ENCODE measurements at regions of chr5 and their contacts with region 1.

Region 1: DNA sequence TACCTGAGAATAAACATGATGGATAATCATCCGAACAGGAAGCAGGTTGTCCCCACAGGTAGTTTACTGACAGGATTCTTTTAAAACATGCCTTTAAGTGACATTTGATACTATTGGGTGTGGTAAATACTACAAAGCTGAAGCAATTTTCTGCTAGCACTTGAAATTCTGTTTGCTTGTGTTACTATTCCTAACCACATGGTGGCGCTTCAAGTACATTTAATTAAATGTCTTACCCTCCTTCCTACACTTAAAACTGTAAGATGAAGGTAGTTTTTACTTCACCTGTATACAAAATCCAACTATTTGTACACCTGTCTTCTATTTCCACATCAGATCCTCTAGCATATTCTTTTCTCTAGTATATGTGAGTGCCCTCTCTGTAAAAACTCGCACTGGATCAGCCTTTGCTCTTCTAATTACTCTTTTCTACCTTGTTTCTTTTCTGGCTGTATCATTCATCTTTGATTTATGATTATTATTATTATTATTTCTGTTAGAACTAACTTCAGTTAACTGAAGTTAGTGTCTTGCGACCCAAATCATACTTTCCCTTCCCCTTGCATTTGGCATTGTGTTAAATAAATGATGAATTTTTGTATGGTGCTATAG is 18.4 kb downstream of the SLC25A46 start:
- DNase-seq: peak; percentile 46
- ATAC-seq: no peak
- H3K4me3 ChIP-seq: no peak overlapping the region
- H3K27ac ChIP-seq: no peak overlapping the region
- H3K4me1 ChIP-seq: no peaks in the 10 kb centered on the region
- H3K27me3 ChIP-seq: no peaks in the 10 kb centered on the region
- CTCF ChIP-seq: peak; percentile 69; the same call in 1 of the 2 replicates

Region 2: GRCh38 chr5:110769000-110769681 is 11.9 kb after region 1 on chr5:
- CTCF ChIA-PET with region 1: no interaction called
- POLR2A ChIA-PET with region 1: interaction called, 11 read pairs
- in situ Hi-C with region 1: no loop called
- intact Hi-C with region 1: no loop called
- DNase-seq: no peak
- ATAC-seq: no peak
- H3K4me3 ChIP-seq: no peak overlapping the region
- H3K27ac ChIP-seq: no peak overlapping the region
- H3K4me1 ChIP-seq: no peaks in the 10 kb centered on the region
- H3K27me3 ChIP-seq: no peaks in the 10 kb centered on the region
- CTCF ChIP-seq: no peak

Region 3: GRCh38 chr5:111063700-111064322 is 306.6 kb after region 1 on chr5:
- CTCF ChIA-PET with region 1: no interaction called
- POLR2A ChIA-PET with region 1: no interaction called
- in situ Hi-C with region 1: no loop called
- intact Hi-C with region 1: loop called (anchors 5 kb)
- DNase-seq: no peak
- ATAC-seq: no peak; the same call in 1 of the 2 replicates
- H3K4me3 ChIP-seq: no peak overlapping the region
- H3K27ac ChIP-seq: no peak overlapping the region
- H3K4me1 ChIP-seq: no peaks in the 10 kb centered on the region
- H3K27me3 ChIP-seq: peaks cover 11% of the 10 kb centered on the region
- CTCF ChIP-seq: peak; percentile 67

Region 4: DNA sequence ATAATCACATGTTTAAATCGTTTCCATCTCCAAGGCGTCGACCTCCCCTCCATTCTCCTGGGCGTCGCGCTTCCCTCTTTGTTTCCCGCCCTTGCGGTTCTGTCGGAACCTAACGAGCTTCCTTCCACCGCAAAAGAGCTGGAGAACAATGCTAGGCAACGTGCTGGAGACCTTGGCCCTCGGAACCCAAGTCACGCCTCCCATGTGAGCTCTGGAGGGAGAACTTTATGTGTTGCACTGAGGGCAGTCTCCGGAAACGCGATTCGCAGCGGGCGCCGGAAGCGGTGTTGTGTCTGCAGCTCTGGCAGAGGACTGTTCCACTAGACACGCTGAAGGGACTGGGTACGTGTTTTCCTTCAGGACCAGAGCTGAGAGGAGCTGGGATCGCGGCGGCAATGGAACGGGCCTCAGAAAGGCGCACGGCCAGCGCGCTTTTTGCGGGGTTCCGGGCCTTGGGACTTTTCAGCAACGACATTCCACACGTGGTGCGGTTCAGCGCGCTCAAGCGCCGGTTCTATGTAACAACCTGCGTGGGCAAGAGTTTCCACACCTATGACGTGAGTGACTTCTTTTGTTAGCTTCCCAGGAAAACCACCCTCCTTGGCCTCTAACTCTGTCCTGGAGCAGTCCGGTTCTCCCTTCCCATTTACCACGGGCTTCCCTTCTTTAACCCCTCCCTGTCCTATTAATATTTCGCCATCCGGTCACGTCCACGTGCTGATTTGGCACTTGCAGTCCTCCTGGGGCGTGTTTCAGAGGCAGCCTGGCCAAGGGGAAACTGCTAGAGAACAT is 335.0 kb after region 1 on chr5 and contains the start of gene WDR36:
- CTCF ChIA-PET with region 1: no interaction called
- POLR2A ChIA-PET with region 1: no interaction called
- in situ Hi-C with region 1: no loop called
- intact Hi-C with region 1: loop called (anchors 10 kb)
- DNase-seq: peak; percentile 87
- ATAC-seq: peak; percentile 99
- H3K4me3 ChIP-seq: peak within 1 kb of the TSS; percentile 95 to 100
- H3K27ac ChIP-seq: peak within 1 kb of the TSS; percentile 94
- H3K4me1 ChIP-seq: peaks cover 10% of the 10 kb centered on the region
- H3K27me3 ChIP-seq: no peaks in the 10 kb centered on the region
- CTCF ChIP-seq: no peak
- total RNA-seq, gene WDR36: 33.9 TPM

Region 5: GRCh38 chr5:111278845-111279504 is 521.8 kb after region 1 on chr5:
- CTCF ChIA-PET with region 1: no interaction called
- POLR2A ChIA-PET with region 1: no interaction called
- in situ Hi-C with region 1: no loop called
- intact Hi-C with region 1: loop called (anchors 10 kb)
- DNase-seq: peak; percentile 32
- ATAC-seq: peak; percentile 94
- H3K4me3 ChIP-seq: no peak overlapping the region
- H3K27ac ChIP-seq: no peak overlapping the region
- H3K4me1 ChIP-seq: no peaks in the 10 kb centered on the region
- H3K27me3 ChIP-seq: no peaks in the 10 kb centered on the region
- CTCF ChIP-seq: peak; percentile 91

Measured in Panc1 (cell line).